Body of pancreas (tissue), 4 donors: ENCODE measurements at regions of chr13 and their contacts with region 1.

Region 1: GRCh38 chr13:51729866-51730546 is 74.0 kb downstream of the DHRS12 start:
- DNase-seq: peak in 1 of 4 donors; percentile 60
- ATAC-seq: peak; percentile 32
- H3K4me3 ChIP-seq: no peak overlapping the region
- H3K27ac ChIP-seq: peak overlapping the region; percentile 48 to 88 (median 72)
- H3K4me1 ChIP-seq: peaks cover 84% of the 10 kb centered on the region
- H3K27me3 ChIP-seq: no peaks in the 10 kb centered on the region
- CTCF ChIP-seq: no peak
- POLR2A ChIP-seq: no peak

Region 2: GRCh38 chr13:51599444-51600176 is 130.4 kb before region 1 on chr13:
- intact Hi-C with region 1: loop called (anchors 10 kb)
- DNase-seq: no peak
- ATAC-seq: no peak
- H3K4me3 ChIP-seq: no peak overlapping the region
- H3K27ac ChIP-seq: peak overlapping the region in 1 of 4 donors; percentile 64
- H3K4me1 ChIP-seq: peaks cover 83% of the 10 kb centered on the region
- H3K27me3 ChIP-seq: no peaks in the 10 kb centered on the region
- CTCF ChIP-seq: peak in 3 of 7 experiments; percentile 12 to 35 (median 24)
- POLR2A ChIP-seq: no peak